Left colon (tissue), 2 donors: ENCODE measurements at regions of chr10 and their contacts with region 1.

Region 1: GRCh38 chr10:104353325-104354048 is at the start of gene CFAP58:
- DNase-seq: peak; percentile 94 to 95
- ATAC-seq: peak; percentile 98
- total RNA-seq, gene CFAP58: 0.09 to 0.20 TPM

Region 2: GRCh38 chr10:103678178-103678526 is 675.3 kb before region 1 on chr10:
- intact Hi-C with region 1: no loop called
- DNase-seq: peak; percentile 82 to 89
- ATAC-seq: peak; percentile 54

Region 3: GRCh38 chr10:104291439-104291951 is 62.0 kb before region 1 on chr10:
- intact Hi-C with region 1: loop called in 1 of 2 experiments (anchors 5 kb)
- DNase-seq: peak; percentile 79 to 91
- ATAC-seq: peak; percentile 98

Region 4: DNA sequence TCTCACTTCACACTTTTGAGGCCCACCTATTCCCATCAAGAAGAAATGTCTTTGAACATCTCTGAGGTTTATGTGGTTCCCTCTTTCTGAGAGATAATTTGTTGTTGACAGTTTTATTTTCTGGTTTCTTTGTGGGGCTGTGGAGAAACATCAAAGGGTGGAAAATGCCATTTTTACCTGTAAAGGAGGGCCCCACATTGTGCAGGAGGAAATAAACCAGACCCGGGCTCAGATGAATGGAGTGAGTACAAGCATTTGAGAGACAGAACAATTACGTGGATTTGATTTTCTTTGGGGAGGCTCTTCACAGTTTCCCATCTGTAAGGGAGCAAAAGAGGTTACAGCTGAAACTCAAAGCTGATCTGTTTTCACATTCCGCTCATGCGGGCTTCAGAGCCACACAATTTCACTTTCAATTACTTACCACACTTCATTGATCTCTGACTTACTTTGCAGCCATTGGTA is 45.0 kb before region 1 on chr10:
- intact Hi-C with region 1: loop called (anchors 5 kb)
- DNase-seq: no peak
- ATAC-seq: no peak

Region 5: GRCh38 chr10:104527013-104527412 is 173.5 kb after region 1 on chr10:
- intact Hi-C with region 1: no loop called
- DNase-seq: no peak
- ATAC-seq: no peak